ENCODE measurements at regions of chr12 and their contacts with region 1.

Region 1: GRCh38 chr12:119115296-119115905 is 63.3 kb upstream of the HSPB8 start:
- DNase-seq: peak in 1 of 2 donors; percentile 78
- H3K4me3 ChIP-seq: no peak overlapping the region
- H3K27ac ChIP-seq: no peak overlapping the region
- H3K4me1 ChIP-seq: no peaks in the 10 kb centered on the region
- H3K27me3 ChIP-seq: no peaks in the 10 kb centered on the region
- CTCF ChIP-seq: peak in 5 of 7 experiments; percentile 48 to 90 (median 78)
- EP300 ChIP-seq: no peak
- POLR2A ChIP-seq: no peak

Region 2: GRCh38 chr12:119176267-119176849 is 61.0 kb after region 1 on chr12:
- intact Hi-C with region 1: no loop called
- DNase-seq: peak; percentile 78 to 95
- H3K4me3 ChIP-seq: peak overlapping the region in 3 of 4 donors; percentile 12 to 33 (median 26)
- H3K27ac ChIP-seq: peak overlapping the region in 4 of 5 donors; percentile 86 to 95 (median 91)
- H3K4me1 ChIP-seq: peaks cover 3 to 42% (median 24%) of the 10 kb centered on the region in 4 donors
- H3K27me3 ChIP-seq: peaks cover 0 to 5% (median 0%) of the 10 kb centered on the region in 3 donors
- CTCF ChIP-seq: no peak
- EP300 ChIP-seq: peak; percentile 15
- POLR2A ChIP-seq: no peak

Region 3: DNA sequence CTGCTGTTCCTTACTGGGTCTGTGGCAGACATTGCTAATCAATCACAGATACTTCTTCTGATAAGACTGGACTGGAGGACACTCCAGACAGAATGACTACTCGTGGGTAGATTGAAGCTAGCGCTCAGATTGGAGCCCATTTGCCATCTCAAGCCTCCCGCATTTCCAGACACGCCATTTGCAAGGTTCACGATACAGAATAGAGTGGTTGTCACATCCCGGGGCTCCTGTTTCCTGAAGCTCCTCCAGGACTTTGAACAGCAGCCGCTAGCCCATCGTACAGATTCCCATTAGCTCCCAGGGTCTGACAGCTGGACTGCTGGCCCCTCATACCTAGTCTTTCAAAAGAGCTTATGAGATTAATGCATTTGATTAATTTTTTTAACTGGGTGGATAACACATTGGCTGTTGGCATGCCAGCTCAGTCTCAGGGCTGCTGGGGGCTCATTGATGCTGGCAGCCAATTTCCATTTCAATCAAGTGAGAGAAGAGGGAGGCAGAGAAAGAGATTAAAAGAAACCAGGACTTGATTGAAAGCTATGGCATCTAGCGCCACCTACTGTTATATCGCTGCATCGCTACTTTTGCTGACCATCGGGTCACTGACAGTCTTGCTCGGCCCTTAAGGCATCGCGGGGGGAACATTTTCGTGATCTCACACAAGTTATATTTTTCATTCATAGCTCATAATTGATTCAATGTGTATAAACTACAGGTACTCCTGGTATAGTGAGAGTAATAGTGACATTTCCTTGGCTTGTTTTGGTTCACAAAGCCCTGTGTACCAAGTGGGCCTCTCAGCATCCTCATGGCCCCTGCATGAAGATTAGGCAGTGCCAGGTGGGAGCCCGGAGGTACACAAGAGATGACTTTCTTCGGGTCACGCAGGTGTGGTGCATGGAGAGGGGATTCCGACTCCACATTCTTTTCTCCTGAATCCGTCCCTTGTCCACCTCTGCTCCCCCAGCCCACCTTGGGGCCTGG is 297.7 kb after region 1 on chr12:
- intact Hi-C with region 1: loop called (anchors 5 kb)
- DNase-seq: peak; percentile 68 to 86
- H3K4me3 ChIP-seq: no peak overlapping the region
- H3K27ac ChIP-seq: no peak overlapping the region
- H3K4me1 ChIP-seq: peaks cover 4 to 14% (median 7%) of the 10 kb centered on the region in 4 donors
- H3K27me3 ChIP-seq: peaks cover 0 to 10% (median 0%) of the 10 kb centered on the region in 3 donors
- CTCF ChIP-seq: peak in 5 of 7 experiments; percentile 67 to 84 (median 81)
- EP300 ChIP-seq: no peak
- POLR2A ChIP-seq: no peak